ENCODE measurements at regions of chr7 and their contacts with region 1.

Region 1: GRCh38 chr7:123871998-123872867 is 27.3 kb downstream of the HYAL4 start:
- DNase-seq: peak; percentile 21 to 58
- H3K4me3 ChIP-seq: no peak overlapping the region
- H3K27ac ChIP-seq: no peak overlapping the region
- H3K4me1 ChIP-seq: no peaks in the 10 kb centered on the region
- H3K27me3 ChIP-seq: no peaks in the 10 kb centered on the region
- CTCF ChIP-seq: peak; percentile 54 to 80 (median 66)
- EP300 ChIP-seq: no peak
- POLR2A ChIP-seq: no peak
- RAD21 ChIP-seq: peak; percentile 94 to 95

Region 2: GRCh38 chr7:123624527-123625183 is 247.6 kb before region 1 on chr7:
- CTCF ChIA-PET with region 1: interaction called, 14 read pairs
- POLR2A ChIA-PET with region 1: no interaction called
- DNase-seq: peak; percentile 36 to 83
- H3K4me3 ChIP-seq: no peak overlapping the region
- H3K27ac ChIP-seq: no peak overlapping the region
- H3K4me1 ChIP-seq: no peaks in the 10 kb centered on the region; a peak in 1 of 7 replicates
- H3K27me3 ChIP-seq: no peaks in the 10 kb centered on the region
- CTCF ChIP-seq: peak; percentile 62 to 98 (median 75)
- EP300 ChIP-seq: no peak
- POLR2A ChIP-seq: no peak
- RAD21 ChIP-seq: peak; percentile 44 to 51; a peak in 3 of 4 replicates

Region 3: DNA sequence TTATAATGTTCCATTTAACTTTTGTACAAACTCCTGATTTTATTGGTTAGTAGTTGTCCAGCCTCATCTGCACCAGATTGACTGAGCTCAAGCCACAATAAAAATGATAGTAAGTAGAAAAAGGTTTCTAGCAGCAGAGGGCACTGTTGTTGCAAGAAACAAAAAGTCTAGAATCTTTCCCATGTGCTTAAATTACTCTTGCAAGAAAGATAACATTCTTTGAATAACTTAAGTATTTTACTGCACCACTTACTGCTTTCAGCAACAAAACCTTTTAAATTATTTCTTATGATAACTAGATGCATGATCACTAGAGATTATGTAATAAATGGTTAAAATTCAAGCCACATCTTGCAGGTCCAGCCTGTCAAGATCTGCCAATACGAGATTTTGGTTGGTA is 189.5 kb before region 1 on chr7:
- CTCF ChIA-PET with region 1: interaction called, 18 read pairs
- POLR2A ChIA-PET with region 1: interaction called, 3 read pairs
- DNase-seq: no peak
- H3K4me3 ChIP-seq: no peak overlapping the region
- H3K27ac ChIP-seq: no peak overlapping the region
- H3K4me1 ChIP-seq: no peaks in the 10 kb centered on the region
- H3K27me3 ChIP-seq: peaks cover 0 to 1% (median 0%) of the 10 kb centered on the region in 4 experiments; a peak in 1 of 7 replicates
- CTCF ChIP-seq: peak in 2 of 3 experiments; percentile 38 to 40; a peak in 2 of 4 replicates
- EP300 ChIP-seq: no peak
- POLR2A ChIP-seq: no peak
- RAD21 ChIP-seq: peak; percentile 63 to 67

Region 4: GRCh38 chr7:123792547-123792946 is 79.7 kb before region 1 on chr7:
- CTCF ChIA-PET with region 1: interaction called, 71 read pairs
- POLR2A ChIA-PET with region 1: no interaction called
- DNase-seq: no peak
- H3K4me3 ChIP-seq: no peak overlapping the region
- H3K27ac ChIP-seq: no peak overlapping the region
- H3K4me1 ChIP-seq: no peaks in the 10 kb centered on the region
- H3K27me3 ChIP-seq: no peaks in the 10 kb centered on the region
- CTCF ChIP-seq: no peak
- EP300 ChIP-seq: no peak
- POLR2A ChIP-seq: no peak
- RAD21 ChIP-seq: no peak

Region 5: GRCh38 chr7:123846216-123846891 is 25.9 kb before region 1 on chr7:
- CTCF ChIA-PET with region 1: interaction called, 10 read pairs
- POLR2A ChIA-PET with region 1: no interaction called
- DNase-seq: no peak
- H3K4me3 ChIP-seq: no peak overlapping the region
- H3K27ac ChIP-seq: no peak overlapping the region
- H3K4me1 ChIP-seq: no peaks in the 10 kb centered on the region
- H3K27me3 ChIP-seq: no peaks in the 10 kb centered on the region
- CTCF ChIP-seq: no peak
- EP300 ChIP-seq: no peak
- POLR2A ChIP-seq: no peak
- RAD21 ChIP-seq: no peak

Region 6: GRCh38 chr7:124752310-124752709 is 880.1 kb after region 1 on chr7:
- CTCF ChIA-PET with region 1: no interaction called
- POLR2A ChIA-PET with region 1: no interaction called
- DNase-seq: no peak
- H3K4me3 ChIP-seq: no peak overlapping the region
- H3K27ac ChIP-seq: no peak overlapping the region
- H3K4me1 ChIP-seq: peaks cover 0 to 7% (median 0%) of the 10 kb centered on the region in 4 experiments; a peak in 2 of 7 replicates
- H3K27me3 ChIP-seq: no peaks in the 10 kb centered on the region
- CTCF ChIP-seq: no peak
- EP300 ChIP-seq: no peak
- POLR2A ChIP-seq: no peak
- RAD21 ChIP-seq: no peak

Measured in H1 (cell line).